ENCODE measurements at regions of chr16 and their contacts with region 1.

Region 1: DNA sequence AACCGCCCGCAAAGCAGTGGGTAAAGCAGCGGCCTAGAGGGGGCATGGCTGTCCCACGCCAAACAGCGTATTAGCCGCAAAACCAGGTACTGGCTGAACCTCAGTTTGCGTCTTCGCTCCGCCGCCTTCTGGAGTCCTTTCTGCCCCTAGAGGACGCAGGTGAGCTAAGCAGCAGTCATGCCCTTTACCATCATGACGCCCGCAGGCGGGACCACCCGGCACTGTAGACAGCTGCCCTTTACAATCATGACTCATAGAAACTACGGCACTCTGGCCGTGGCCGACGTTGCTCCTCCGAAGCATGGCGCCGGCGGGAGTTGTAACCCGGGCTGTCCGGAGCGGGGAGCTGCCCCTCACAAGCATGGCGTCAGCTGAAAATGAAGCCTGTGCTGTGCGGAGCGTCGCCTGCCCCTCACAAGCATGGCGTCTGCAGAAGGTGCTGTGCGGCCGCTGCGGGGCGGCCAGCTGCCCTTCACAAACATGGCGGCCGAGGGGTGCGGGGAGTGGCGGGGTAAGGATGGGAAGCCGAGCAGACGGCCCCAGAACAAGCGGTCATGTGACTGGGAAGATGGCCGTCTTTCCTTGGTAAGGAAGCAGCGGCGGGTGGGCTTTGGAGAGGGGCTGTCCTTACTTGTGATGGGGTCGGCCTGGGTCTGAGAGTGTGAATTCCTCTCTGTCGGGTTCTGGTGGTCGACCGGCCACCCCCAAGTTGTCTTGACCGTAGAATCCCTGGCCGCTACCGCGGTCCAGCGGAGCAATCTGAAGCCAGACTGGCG is at the start of gene VPS35L:
- DNase-seq: peak; percentile 97
- ATAC-seq: peak; percentile 98
- H3K4me3 Mint-ChIP-seq: peak within 1 kb of the TSS; percentile 85
- H3K27ac Mint-ChIP-seq: peak within 1 kb of the TSS; percentile 94
- H3K4me1 Mint-ChIP-seq: peaks cover 19% of the 10 kb centered on the region
- H3K27me3 Mint-ChIP-seq: no peaks in the 10 kb centered on the region
- total RNA-seq, gene VPS35L: 61.5 to 65.1 TPM

Region 2: DNA sequence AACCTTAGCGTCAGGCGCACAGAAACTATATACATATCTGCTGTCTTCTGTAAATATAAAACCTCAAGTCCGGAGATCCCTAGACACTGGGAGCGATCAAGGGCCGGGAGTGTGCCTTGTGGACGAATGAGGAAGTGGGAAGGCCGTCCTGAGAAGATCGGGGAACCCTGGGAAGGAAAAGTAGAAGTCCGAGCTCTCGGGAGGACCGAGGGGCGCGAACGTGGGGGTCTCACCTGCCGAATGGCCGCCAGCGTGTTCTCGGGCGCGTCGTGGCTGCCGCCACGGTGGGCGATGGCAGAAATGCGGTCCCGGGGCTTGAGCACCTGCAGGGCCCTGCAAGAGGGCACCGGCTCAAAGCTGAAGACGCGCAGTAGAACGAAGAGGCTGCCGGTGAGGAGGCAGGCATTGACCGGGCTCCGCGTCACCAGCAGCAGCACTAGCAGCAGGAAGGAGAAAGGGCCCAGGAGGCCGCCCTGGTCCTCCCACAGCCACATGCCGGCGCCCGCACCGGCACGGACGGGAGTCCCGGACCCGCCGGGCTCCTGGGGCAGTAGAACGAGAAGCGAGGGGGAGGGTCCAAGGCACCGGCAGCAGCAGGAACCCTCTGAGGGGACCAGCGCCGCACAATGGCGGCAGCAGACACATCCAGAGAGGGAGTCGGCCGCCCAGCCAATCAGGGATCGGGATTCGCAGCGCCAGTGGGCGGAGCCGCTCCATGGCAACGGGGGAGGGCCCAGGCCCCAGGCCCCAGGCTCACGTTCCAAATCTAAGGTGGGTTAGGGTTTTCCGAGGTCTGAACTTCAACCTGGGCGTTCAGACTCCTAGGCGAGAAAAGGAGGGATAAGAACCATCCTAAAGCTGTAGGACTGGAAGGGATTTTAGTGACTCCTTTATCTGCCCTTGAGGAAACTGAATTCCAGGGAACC is 33.6 kb before region 1 on chr16 and contains the start of gene GDE1:
- CTCF ChIA-PET with region 1: interaction called, 43 read pairs
- POLR2A ChIA-PET with region 1: interaction called, 34 read pairs
- DNase-seq: peak; percentile 94
- ATAC-seq: peak; percentile 85
- H3K4me3 Mint-ChIP-seq: peak within 1 kb of the TSS; percentile 97
- H3K27ac Mint-ChIP-seq: peak within 1 kb of the TSS; percentile 93
- H3K4me1 Mint-ChIP-seq: peaks cover 58% of the 10 kb centered on the region
- H3K27me3 Mint-ChIP-seq: no peaks in the 10 kb centered on the region
- total RNA-seq, gene GDE1: 19.7 to 25.9 TPM

Region 3: DNA sequence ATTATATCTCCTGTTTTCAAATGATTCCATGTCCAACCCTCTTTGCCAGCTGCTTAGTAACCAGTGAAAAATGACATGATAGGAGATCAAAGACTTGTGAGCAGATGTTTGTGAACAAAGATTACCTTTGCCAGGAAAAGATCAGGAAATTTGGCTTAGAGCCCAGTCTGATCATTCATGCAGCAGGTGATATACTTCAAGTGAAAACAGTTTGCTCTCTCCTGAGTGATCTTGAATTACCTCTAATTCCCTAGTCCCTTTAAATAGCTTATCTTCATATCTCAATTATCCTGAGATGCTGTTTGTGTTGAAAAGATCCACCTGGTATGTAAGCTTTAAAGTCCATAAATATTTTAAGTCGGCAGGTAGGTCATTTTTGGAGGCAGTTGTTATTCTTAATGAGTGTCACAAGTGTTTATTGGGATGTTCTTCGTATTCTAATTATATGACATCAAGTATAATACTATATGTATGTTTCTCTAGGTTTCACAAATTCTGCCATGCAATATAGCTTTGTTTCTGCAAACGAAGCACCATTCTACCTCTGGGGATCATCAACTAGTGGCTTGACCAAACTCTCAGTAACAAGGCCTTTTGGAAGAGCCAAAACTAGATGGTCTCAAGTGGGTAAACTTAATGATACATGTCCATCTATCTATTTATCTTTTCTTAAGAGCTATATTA is 13.1 kb before region 1 on chr16:
- CTCF ChIA-PET with region 1: interaction called, 21 read pairs
- POLR2A ChIA-PET with region 1: interaction called, 8 read pairs
- DNase-seq: no peak
- ATAC-seq: no peak
- H3K4me3 Mint-ChIP-seq: no peak overlapping the region
- H3K27ac Mint-ChIP-seq: no peak overlapping the region
- H3K4me1 Mint-ChIP-seq: peaks cover 9% of the 10 kb centered on the region
- H3K27me3 Mint-ChIP-seq: no peaks in the 10 kb centered on the region

Region 4: GRCh38 chr16:19595043-19595767 is 39.9 kb after region 1 on chr16:
- CTCF ChIA-PET with region 1: interaction called, 14 read pairs
- POLR2A ChIA-PET with region 1: interaction called, 3 read pairs
- DNase-seq: no peak
- ATAC-seq: no peak
- H3K4me3 Mint-ChIP-seq: no peak overlapping the region
- H3K27ac Mint-ChIP-seq: no peak overlapping the region
- H3K4me1 Mint-ChIP-seq: no peaks in the 10 kb centered on the region
- H3K27me3 Mint-ChIP-seq: no peaks in the 10 kb centered on the region

Region 5: GRCh38 chr16:19672378-19672777 is 117.0 kb after region 1 on chr16:
- CTCF ChIA-PET with region 1: no interaction called
- POLR2A ChIA-PET with region 1: no interaction called
- DNase-seq: no peak
- ATAC-seq: no peak
- H3K4me3 Mint-ChIP-seq: no peak overlapping the region
- H3K27ac Mint-ChIP-seq: no peak overlapping the region
- H3K4me1 Mint-ChIP-seq: no peaks in the 10 kb centered on the region
- H3K27me3 Mint-ChIP-seq: no peaks in the 10 kb centered on the region

Measured in activated CD8-positive, alpha-beta T cell treated with anti-CD3 and anti-CD28 coated beads, Interleukin-2, amount 10 ng/mL, durations not matched to agents 7 days and 5 days (primary cell).